ENCODE measurements at regions of chr11 and their contacts with region 1.

Region 1: GRCh38 chr11:122863704-122864326 is 18.7 kb upstream of the JHY start:
- DNase-seq: no peak
- H3K4me3 ChIP-seq: no peak overlapping the region
- H3K27ac ChIP-seq: no peak overlapping the region
- H3K4me1 ChIP-seq: no peaks in the 10 kb centered on the region
- H3K27me3 ChIP-seq: no peaks in the 10 kb centered on the region
- CTCF ChIP-seq: peak in 3 of 4 experiments; percentile 58 to 64 (median 64)
- POLR2A ChIP-seq: no peak

Region 2: DNA sequence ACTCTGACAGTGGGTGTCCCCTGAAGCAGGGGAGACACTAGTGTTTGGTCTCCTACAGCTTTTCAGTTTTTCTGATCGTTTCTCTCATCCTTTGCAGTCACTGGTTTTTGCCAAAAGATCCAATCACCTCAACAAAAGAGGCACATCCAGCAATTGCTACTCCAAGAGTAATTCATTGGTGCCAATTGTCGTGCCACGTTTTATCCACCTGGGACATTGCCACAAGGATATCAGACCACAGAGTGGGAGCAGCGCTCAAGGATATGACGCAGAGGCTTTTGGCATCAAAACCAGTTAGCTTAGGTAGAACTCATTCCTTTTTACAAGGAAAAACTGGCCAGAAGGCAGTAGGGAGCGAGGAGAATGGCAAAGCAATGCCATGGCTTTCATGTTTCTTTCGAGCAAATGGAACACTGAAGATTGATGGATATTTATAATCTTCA is 706.9 kb before region 1 on chr11:
- intact Hi-C with region 1: no loop called
- DNase-seq: peak; percentile 75
- H3K4me3 ChIP-seq: peak overlapping the region; percentile 24 to 27
- H3K27ac ChIP-seq: peak overlapping the region; percentile 78
- H3K4me1 ChIP-seq: peaks cover 2% of the 10 kb centered on the region
- H3K27me3 ChIP-seq: no peaks in the 10 kb centered on the region
- CTCF ChIP-seq: no peak
- POLR2A ChIP-seq: no peak

Region 3: GRCh38 chr11:123020968-123021367 is 157.2 kb after region 1 on chr11:
- intact Hi-C with region 1: loop called (anchors 5 kb)
- DNase-seq: no peak
- H3K4me3 ChIP-seq: no peak overlapping the region
- H3K27ac ChIP-seq: no peak overlapping the region
- H3K4me1 ChIP-seq: no peaks in the 10 kb centered on the region
- H3K27me3 ChIP-seq: no peaks in the 10 kb centered on the region
- CTCF ChIP-seq: no peak
- POLR2A ChIP-seq: no peak

Region 4: DNA sequence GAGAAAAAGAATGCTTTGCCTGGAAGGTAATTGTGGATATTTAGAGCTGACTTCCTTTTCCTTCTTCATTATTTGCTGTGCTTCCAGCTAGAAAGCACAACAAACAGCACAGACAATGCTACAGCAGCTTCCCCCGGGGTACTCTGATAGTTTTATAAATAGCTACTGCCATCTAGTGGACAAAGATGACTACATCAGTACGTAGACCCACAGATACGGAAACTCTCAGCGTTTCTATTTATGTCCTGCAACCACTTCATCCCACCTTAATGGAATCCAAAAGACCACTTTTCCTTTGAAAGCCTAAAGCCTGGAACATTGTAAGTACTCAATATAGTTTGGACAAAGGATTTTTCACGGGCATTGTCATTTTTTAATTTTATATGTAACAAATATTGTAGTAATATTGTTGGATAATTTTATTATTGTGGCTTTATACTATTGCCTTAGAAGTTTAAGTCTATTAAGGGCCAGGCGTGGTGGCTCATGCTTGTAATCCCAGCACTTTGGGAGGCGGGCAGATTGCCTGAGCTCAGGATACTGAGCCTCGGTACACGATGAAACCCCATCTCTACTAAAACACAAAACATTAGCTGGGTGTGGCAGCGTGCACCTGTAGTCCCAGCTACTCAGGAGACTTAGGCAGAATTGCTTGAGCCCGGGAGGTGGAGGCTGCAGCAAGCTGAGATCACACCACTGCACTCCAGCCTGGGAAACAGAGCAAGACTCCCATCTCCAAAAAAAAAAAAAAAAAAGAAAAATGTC is 190.7 kb after region 1 on chr11:
- intact Hi-C with region 1: loop called (anchors 10 kb)
- DNase-seq: peak; percentile 44
- H3K4me3 ChIP-seq: no peak overlapping the region
- H3K27ac ChIP-seq: no peak overlapping the region
- H3K4me1 ChIP-seq: peaks cover 18% of the 10 kb centered on the region
- H3K27me3 ChIP-seq: no peaks in the 10 kb centered on the region
- CTCF ChIP-seq: peak; percentile 38 to 77 (median 66)
- POLR2A ChIP-seq: no peak

Measured in prostate gland (tissue), 2 donors.